ENCODE measurements at regions of chr5 and their contacts with region 1.

Region 1: DNA sequence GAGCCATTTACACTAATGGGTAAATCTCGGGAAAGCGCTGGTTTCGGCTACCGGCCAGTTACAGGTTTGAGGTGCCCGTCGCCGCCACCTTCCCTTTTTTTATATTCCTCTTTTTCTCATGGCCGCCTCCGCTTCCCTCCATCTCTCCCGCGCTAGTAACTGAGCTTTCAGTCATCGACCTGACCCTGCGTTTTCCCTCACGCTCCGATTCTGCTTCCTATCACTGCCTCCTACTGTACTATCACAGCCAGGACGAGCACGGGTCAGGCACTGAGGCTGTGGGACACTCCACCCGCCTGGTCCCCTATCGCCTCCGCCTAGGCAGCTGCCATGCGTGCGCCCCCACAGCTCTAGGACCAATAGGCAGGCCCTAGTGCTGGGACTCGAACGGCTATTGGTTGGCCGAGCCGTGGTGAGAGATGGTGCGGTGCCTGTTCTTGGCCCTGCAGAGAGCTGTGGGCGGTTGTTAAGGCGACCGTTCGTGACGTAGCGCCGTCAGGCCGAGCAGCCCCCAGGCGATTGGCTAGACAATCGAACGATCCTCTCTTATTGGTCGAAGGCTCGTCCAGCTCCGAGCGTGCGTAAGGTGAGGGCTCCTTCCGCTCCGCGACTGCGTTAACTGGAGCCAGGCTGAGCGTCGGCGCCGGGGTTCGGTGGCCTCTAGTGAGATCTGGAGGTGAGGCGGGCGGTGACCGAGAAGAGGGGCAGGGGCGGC is at the start of gene HMGCR:
- DNase-seq: peak; percentile 97 to 100 (median 99)
- H3K4me3 ChIP-seq: peak within 1 kb of the TSS; percentile 60 to 100 (median 93)
- H3K27ac ChIP-seq: peak within 1 kb of the TSS; percentile 59 to 98 (median 94)
- H3K27me3 ChIP-seq: no peaks in the 10 kb centered on the region
- CTCF ChIP-seq: peak in 37 of 56 donors; percentile 3 to 57 (median 30)
- total RNA-seq, gene HMGCR: 34.4 to 162 (median 84.8) TPM

Region 2: GRCh38 chr5:74684900-74685851 is 651.6 kb before region 1 on chr5 and contains the start of gene HEXB:
- intact Hi-C with region 1: loop called in 1 of 2 experiments (anchors 10 kb)
- DNase-seq: peak; percentile 72 to 93 (median 84)
- H3K4me3 ChIP-seq: peak within 1 kb of the TSS; percentile 64 to 98 (median 88)
- H3K27ac ChIP-seq: peak within 1 kb of the TSS; percentile 9 to 97 (median 86)
- H3K27me3 ChIP-seq: no peaks in the 10 kb centered on the region
- CTCF ChIP-seq: peak in 24 of 56 donors; percentile 4 to 47 (median 22)
- total RNA-seq, gene HEXB: 30.9 to 75.5 (median 53.2) TPM

Region 3: GRCh38 chr5:75044406-75044805 is 292.4 kb before region 1 on chr5:
- intact Hi-C with region 1: loop called in 1 of 2 experiments (anchors 5 kb)
- DNase-seq: peak in 6 of 10 donors; percentile 33 to 65 (median 47)
- H3K4me3 ChIP-seq: no peak overlapping the region
- H3K27ac ChIP-seq: peak overlapping the region in 50 of 59 donors; percentile 1 to 76 (median 54)
- H3K27me3 ChIP-seq: no peaks in the 10 kb centered on the region
- CTCF ChIP-seq: no peak

Region 4: GRCh38 chr5:75320341-75320740 is 16.4 kb before region 1 on chr5:
- intact Hi-C with region 1: no loop called
- DNase-seq: no peak
- H3K4me3 ChIP-seq: no peak overlapping the region
- H3K27ac ChIP-seq: no peak overlapping the region
- H3K27me3 ChIP-seq: no peaks in the 10 kb centered on the region
- CTCF ChIP-seq: no peak

Region 5: GRCh38 chr5:75433814-75434506 is 97.2 kb after region 1 on chr5:
- intact Hi-C with region 1: no loop called
- DNase-seq: no peak
- H3K4me3 ChIP-seq: no peak overlapping the region
- H3K27ac ChIP-seq: no peak overlapping the region
- H3K27me3 ChIP-seq: no peaks in the 10 kb centered on the region
- CTCF ChIP-seq: no peak

Region 6: GRCh38 chr5:75465480-75465879 is 128.7 kb after region 1 on chr5:
- intact Hi-C with region 1: no loop called
- DNase-seq: no peak
- H3K4me3 ChIP-seq: no peak overlapping the region
- H3K27ac ChIP-seq: peak overlapping the region in 3 of 59 donors; percentile 7 to 37 (median 9)
- H3K27me3 ChIP-seq: no peaks in the 10 kb centered on the region
- CTCF ChIP-seq: no peak

Region 7: GRCh38 chr5:75511435-75512384 is 174.9 kb after region 1 on chr5 and contains the starts of genes CERT1 and POLK:
- intact Hi-C with region 1: loop called (anchors 1 to 2 kb)
- DNase-seq: peak; percentile 95 to 100 (median 98)
- H3K4me3 ChIP-seq: peak within 1 kb of the TSS; percentile 67 to 98 (median 88)
- H3K27ac ChIP-seq: peak within 1 kb of the TSS; percentile 82 to 99 (median 96)
- H3K27me3 ChIP-seq: no peaks in the 10 kb centered on the region
- CTCF ChIP-seq: peak in 18 of 56 donors; percentile 6 to 47 (median 24)
- total RNA-seq, gene CERT1: 37.0 to 86.0 (median 61.1) TPM
- total RNA-seq, gene POLK: 30.3 to 55.8 (median 41.3) TPM

Region 8: DNA sequence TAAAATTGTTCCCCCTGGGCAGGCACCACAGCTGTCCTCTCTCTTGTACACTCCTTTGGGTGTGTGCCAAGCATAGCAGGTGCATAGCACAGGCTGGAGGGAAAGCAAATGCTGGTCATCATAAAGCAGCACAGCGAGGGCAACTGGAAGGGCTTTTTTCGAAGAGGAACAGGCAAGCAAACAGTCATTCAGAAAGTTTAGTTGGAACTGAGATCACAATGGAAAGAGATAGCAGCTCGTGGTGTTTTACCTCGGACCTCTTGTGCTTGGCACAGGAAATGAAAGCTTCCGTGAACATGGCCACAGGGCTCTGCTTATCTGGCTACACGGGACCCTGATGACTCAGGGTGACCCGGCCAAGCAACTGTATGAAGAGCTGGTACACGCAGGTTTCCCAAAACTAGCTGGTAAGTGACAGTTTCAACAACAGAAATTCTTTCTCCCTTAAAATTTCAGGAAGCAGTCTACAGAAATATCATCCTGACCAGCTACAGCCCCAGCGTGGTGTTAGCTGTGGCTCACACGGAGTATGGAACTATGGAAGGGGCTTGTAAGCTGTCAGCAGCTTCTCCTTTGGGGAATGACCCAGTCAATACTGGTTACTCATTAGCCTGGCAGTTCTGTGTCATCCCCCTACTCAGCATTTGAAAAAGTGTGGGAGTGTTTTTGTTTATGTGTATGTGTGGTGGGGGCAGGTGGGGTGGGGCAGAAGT is 332.4 kb after region 1 on chr5:
- intact Hi-C with region 1: loop called (anchors 10 kb)
- DNase-seq: peak in 1 of 10 donors; percentile 26
- H3K4me3 ChIP-seq: peak overlapping the region in 27 of 59 donors; percentile 1 to 42 (median 22)
- H3K27ac ChIP-seq: peak overlapping the region in 5 of 59 donors; percentile 8 to 55 (median 15)
- H3K27me3 ChIP-seq: no peaks in the 10 kb centered on the region
- CTCF ChIP-seq: no peak

Region 9: DNA sequence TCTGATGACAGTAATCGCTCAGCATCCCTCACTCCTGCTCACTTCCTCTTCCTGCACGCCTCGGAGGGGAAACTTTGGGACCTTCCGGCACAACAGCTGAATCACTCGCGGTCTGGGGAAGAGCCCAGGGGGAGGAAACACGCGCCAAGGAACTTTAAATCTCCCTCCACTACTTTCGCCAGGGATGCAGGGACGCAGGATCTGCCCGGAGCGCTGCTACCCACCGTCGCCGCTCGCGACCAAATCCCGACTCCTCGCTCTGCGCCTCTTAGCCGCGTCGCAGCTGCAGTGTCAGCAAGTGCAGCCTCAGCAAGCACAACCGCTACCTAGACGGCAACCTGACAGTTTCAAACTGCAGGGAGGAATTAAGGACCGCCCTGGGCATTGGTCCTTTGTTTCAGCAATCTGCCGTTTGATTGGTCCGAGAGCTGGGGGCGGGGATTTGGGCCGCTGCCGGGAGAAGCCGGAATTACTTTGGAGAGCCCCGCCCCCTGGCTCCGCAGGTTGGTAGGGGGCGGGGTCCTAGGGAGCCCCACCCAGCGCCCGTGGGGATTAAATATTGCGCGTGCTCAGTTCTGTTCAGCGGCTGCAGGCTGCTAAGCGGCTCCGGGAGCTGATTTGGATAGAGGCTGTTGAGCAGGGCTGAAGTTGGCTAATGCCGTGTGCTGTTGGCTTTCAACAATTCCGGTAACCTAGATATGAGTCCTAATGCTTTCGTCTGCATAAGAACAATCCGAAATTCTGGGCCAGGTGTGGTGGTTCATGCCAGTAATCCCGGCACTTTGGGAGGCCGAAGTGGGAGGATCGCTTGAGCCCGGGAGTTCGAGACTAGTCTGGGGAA is 380.5 kb after region 1 on chr5 and contains the start of gene POC5:
- intact Hi-C with region 1: loop called in 1 of 2 experiments (anchors 2 kb)
- DNase-seq: peak; percentile 91 to 97 (median 94)
- H3K4me3 ChIP-seq: peak within 1 kb of the TSS; percentile 62 to 99 (median 87)
- H3K27ac ChIP-seq: peak within 1 kb of the TSS in 57 of 59 donors; percentile 10 to 93 (median 81)
- H3K27me3 ChIP-seq: no peaks in the 10 kb centered on the region
- CTCF ChIP-seq: peak in 33 of 56 donors; percentile 5 to 60 (median 29)
- total RNA-seq, gene POC5: 7.6 to 28.1 (median 15.2) TPM